ENCODE measurements at regions of chr5 and their contacts with region 1.

Region 1: DNA sequence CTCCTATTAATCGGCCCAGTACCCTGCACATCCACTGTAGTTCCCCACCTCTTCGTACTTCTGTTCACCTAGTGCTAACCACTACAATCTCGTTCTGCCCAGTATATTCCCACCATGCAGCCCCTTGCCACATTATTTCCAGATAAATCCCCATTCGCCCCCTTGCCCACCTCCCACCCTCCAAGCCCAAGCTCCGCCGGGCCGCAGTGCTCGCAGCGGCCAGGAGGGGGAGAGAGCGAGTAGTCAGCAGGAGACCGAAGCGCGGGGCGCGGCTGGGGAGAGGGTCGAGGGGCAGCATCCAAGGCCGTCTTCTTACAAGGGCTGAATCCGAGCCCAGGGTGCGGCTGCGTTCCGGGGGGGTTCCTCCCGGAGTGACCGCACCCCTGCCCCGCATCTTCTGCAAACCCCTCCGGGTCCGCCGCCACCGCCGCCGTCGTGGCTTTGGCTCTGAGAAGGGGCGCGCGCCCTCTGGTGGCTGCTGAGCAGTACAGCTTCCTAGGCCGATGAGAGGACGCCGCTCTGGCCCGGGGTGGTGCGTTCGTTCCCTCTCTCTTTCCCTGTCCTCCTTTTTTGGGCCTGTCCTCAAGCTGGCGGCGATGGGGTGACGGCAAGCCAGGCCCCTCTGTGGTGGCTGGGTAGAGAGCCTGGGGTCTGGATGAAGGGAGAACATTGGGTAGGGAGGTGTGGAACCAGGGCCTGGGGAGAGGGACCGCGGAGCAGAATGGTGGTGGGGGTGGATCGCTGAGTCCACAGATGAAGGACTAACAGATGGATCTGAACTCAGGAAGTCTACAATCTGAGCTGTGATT is 30.0 kb upstream of the PSD2 start:
- DNase-seq: peak; percentile 9
- H3K4me3 ChIP-seq: peak overlapping the region; percentile 58
- H3K27me3 ChIP-seq: peaks cover 10% of the 10 kb centered on the region
- CTCF ChIP-seq: peak; percentile 93

Region 2: DNA sequence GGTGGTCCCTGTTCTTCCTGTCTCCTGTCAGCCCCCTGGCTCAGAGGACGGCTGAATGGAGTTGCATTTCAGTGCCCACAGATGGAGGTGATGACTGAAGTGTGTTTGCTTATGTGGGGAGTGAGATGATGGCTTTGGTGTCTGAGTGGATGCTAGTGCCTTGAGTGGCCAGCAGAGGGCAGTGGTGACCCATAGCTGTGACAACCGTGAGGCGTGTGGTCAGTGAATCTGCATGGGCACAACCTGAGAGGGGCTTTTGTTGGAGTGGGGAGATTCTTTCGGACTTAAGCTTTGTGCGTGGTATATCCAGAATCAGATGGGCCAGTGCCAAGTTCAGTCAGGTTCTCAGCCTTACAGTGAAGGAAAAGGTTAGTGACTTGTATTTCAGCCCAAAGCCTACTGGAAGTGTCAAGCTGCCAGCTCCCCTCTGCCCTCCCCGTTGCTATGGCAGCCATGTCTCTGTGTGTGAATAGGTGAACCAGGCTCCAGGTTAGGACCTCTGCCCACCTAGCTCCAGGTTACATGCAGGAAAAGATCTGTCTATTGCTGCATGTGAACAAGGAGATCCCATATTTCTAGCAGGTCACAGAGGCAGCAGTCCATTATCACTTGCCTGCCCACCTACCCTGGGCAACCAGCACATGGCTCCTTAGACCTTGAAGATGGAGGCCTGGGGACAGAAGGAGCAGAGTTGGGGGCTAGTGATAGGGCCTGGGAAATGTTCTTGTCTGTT is 132.2 kb before region 1 on chr5:
- CTCF ChIA-PET with region 1: interaction called, 498 read pairs
- POLR2A ChIA-PET with region 1: no interaction called
- DNase-seq: no peak
- H3K4me3 ChIP-seq: no peak overlapping the region
- H3K27me3 ChIP-seq: no peaks in the 10 kb centered on the region
- CTCF ChIP-seq: peak; percentile 97

Region 3: DNA sequence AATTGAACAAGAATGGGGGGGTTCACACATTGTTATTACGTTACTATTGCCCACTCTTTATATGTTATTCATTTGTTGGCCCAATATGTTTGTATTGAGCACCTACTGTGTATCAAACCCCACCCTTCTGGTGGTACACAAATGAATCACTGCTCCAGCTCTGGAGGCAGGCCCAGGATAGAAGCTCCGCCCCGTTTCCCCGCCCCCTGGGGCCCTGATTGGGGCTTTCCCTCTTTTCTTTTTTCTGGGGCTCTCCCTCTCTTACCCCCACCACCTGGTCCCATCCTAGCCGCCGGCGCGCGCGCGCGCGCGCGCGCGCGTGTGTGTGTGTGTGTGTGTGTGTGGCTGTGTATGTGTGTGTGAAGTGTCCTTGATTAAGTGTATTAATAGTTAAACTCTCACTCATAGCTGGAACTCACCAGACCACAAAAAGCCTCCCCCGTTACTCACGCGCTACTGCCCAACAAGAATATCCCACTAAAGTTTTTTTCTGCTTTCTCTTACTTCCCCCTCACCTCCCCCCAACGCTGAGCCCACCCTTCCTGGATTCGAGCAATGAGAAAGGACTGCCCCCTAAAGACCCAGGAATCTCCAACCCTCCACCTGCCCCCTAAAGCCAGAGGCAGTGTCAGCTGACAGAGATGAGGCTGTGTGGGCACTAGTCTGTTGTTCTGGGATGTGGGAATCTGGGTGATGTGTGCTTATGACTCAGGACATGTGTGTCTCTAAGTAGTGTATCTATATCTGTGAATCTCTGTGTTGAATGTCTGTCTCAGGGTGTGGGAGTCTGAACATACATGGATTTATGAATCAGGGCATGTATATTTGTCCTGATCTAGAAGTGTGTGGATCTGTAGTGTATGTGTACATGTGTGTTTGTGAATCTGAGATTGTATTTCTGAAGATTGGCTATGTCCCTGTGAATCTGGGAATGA is 113.5 kb before region 1 on chr5:
- CTCF ChIA-PET with region 1: interaction called, 50 read pairs
- POLR2A ChIA-PET with region 1: no interaction called
- DNase-seq: peak; percentile 52
- H3K4me3 ChIP-seq: peak overlapping the region; percentile 24
- H3K27me3 ChIP-seq: no peaks in the 10 kb centered on the region
- CTCF ChIP-seq: no peak

Region 4: GRCh38 chr5:139668064-139668880 is 97.3 kb before region 1 on chr5:
- CTCF ChIA-PET with region 1: interaction called, 13 read pairs
- POLR2A ChIA-PET with region 1: no interaction called
- DNase-seq: no peak
- H3K4me3 ChIP-seq: peak overlapping the region; percentile 18
- H3K27me3 ChIP-seq: no peaks in the 10 kb centered on the region
- CTCF ChIP-seq: no peak

Region 5: DNA sequence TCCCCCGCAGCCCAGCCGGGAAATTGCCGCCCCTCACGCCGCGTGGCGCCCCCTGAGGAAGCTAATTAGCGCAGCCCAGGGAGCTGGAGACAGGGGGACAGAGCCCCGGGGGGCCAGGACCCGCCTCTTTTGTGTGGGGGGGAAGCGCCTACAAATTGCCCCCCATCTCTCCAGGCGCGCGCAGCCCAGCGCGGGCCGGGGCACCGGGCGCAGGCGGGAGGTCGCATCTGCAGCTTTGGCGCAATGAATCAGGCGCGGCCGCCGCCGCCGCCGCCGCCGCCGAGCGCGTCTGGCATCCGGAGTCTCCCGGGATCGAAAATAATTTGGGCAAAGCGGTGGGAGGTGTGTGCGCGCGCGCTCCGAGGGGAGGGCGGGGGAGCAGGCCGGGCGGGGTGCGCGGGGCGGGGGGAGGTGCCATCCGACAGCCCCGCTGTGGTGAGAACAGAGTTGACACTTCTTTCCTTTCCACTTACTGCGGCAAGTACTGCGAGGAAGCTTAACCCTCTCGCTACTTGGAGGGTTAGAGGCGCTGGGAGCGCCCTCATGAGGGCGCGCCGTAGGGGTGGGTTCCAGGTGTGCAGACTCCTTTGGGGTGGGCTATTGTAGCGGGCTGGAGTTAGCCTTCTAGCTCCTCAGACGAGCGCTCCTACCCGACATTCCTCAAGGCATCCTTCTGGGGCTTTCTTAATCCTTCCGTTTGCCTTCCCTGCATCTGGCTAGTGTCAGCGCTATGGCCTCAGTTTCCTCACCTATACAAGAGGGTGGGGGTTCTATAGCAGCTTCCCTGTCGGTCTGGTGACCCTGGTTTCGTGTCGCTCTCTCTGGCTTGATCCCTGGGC is 54.3 kb before region 1 on chr5:
- CTCF ChIA-PET with region 1: interaction called, 28 read pairs
- POLR2A ChIA-PET with region 1: no interaction called
- DNase-seq: no peak
- H3K4me3 ChIP-seq: peak overlapping the region; percentile 44
- H3K27me3 ChIP-seq: no peaks in the 10 kb centered on the region
- CTCF ChIP-seq: peak; percentile 28

Region 6: DNA sequence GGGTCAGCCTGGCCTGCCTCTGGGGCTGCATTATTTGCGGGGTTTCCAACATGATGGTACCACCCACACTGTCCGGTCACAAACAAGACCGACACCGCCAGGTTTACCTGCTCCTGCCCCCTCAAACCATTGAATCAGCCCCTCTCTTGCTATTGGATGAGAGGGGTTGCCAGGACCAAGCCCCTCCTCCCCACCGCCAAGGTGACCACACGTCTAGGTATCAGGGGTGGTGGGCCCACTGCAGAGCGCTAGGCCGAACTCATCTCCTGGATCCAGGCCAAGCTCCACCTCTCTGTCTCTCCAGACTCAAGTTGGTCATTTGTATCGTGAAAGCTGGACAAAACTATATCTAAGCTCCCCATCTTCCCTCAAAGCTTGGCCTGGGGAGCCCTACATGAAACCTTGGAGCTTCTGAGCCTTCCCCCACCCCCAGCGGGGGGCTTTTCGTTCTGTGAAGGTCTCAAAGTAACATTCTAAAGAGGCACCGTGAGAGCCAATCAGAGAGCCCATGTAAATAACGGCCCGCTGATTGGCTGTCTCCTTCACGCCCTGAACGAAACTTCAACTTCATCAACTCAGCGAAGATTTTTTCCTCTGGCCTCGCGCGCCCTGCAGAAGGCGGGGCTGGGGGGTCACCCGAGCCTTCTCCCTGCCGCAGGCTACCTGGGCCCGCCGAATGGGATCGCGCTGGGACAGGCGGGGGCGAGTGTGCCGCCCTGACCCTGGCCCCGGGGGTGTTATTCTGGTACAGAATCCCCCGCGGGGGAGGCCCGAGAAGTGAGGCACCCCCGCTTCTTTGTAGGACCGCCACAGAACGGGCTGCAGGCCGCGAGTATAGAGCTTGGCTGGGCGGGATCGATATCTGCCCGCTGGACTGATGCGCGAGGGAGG is 19.6 kb before region 1 on chr5:
- CTCF ChIA-PET with region 1: interaction called, 15 read pairs
- POLR2A ChIA-PET with region 1: no interaction called
- DNase-seq: no peak
- H3K4me3 ChIP-seq: peak overlapping the region; percentile 7
- H3K27me3 ChIP-seq: no peaks in the 10 kb centered on the region
- CTCF ChIP-seq: no peak